ENCODE measurements at regions of chr16 and their contacts with region 1.

Region 1: DNA sequence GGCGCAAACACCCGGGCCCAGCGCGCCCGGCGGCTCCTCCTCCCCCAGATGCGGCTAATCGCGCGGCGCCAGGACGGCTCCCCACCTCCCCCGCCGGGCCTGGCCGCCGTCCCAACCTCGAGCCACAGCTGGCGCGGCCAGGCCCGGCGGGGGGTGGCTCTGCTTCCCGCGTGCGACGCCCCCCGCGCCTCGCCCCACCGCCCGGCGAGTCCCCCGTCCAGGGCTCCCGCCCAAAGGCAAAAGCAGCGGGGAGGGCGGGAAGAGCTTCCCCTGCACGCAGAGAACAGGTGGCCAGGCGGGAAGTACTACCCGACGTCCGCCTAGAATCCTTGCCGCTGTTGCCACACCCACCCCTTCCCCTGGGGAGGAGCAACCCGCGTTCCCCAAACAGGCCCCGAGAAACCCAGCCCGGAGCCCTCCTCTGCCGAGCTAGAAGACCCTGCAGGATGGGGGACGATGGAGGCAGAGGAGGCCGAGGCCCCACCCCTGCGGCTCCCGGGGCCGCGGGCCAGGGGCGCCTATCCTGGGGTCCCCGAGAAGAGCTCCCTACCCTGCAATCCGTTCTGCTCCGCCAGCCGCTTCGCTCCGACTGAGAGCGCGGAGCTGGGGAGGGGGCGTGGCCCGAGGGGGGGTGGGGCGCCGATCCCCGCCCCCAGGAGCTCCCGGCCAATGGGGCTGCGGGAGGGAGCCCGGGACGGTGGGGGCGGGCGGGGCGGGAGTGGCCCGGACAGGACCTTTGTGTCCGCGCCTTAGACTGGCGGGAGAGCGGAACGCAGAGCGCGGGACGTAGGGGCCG is at the start of gene CARHSP1:
- DNase-seq: peak; percentile 90
- H3K4me3 Mint-ChIP-seq: peak within 1 kb of the TSS; percentile 91
- H3K27ac Mint-ChIP-seq: peak within 1 kb of the TSS; percentile 78
- H3K4me1 Mint-ChIP-seq: peaks cover 44% of the 10 kb centered on the region
- H3K27me3 Mint-ChIP-seq: no peaks in the 10 kb centered on the region
- total RNA-seq, gene CARHSP1: 64.9 to 73.1 TPM

Region 2: GRCh38 chr16:8655184-8655717 is 213.4 kb before region 1 on chr16:
- CTCF ChIA-PET with region 1: interaction called, 4 read pairs
- POLR2A ChIA-PET with region 1: no interaction called
- intact Hi-C with region 1: loop called (anchors 5 kb)
- DNase-seq: peak; percentile 81
- H3K4me3 Mint-ChIP-seq: no peak overlapping the region
- H3K27ac Mint-ChIP-seq: peak overlapping the region; percentile 64
- H3K4me1 Mint-ChIP-seq: peaks cover 18% of the 10 kb centered on the region
- H3K27me3 Mint-ChIP-seq: no peaks in the 10 kb centered on the region

Region 3: GRCh38 chr16:8797364-8798173 is 71.0 kb before region 1 on chr16 and contains the starts of genes PMM2 and TMEM186:
- CTCF ChIA-PET with region 1: interaction called, 3 read pairs
- POLR2A ChIA-PET with region 1: interaction called, 9 read pairs
- intact Hi-C with region 1: loop called (anchors 1 kb)
- DNase-seq: peak; percentile 97
- H3K4me3 Mint-ChIP-seq: peak within 1 kb of the TSS; percentile 92
- H3K27ac Mint-ChIP-seq: peak within 1 kb of the TSS; percentile 88
- H3K4me1 Mint-ChIP-seq: peaks cover 50% of the 10 kb centered on the region
- H3K27me3 Mint-ChIP-seq: no peaks in the 10 kb centered on the region
- total RNA-seq, gene PMM2: 34.0 to 36.0 TPM
- total RNA-seq, gene TMEM186: 16.0 TPM

Region 4: GRCh38 chr16:8850279-8850885 is 18.2 kb before region 1 on chr16:
- CTCF ChIA-PET with region 1: interaction called, 3 read pairs
- POLR2A ChIA-PET with region 1: interaction called, 11 read pairs
- intact Hi-C with region 1: no loop called
- DNase-seq: peak; percentile 31
- H3K4me3 Mint-ChIP-seq: no peak overlapping the region
- H3K27ac Mint-ChIP-seq: peak overlapping the region; percentile 83
- H3K4me1 Mint-ChIP-seq: peaks cover 36% of the 10 kb centered on the region
- H3K27me3 Mint-ChIP-seq: no peaks in the 10 kb centered on the region

Region 5: DNA sequence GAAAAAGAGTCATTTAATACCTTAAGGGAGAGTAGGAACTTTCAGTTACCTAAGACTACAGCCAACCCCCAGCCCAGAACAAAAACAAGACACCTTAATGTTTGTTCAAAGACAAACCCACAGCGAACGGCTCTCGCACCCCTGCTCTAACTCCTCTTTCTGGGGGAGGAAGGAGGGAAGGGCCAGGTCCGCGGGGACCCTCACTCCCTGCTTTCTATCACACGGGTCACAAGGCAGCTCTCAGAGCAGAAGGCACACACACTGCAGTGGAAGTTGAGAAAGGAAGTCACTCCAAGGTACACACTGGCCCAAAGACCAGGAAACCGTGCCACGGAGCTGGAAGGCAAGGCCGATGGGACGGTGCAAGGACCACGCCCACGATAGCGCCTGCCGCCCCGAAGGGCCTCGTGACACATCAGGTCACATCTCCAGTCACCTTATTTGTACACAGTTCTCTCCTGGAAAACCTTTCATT is 23.5 kb after region 1 on chr16:
- CTCF ChIA-PET with region 1: interaction called, 3 read pairs
- POLR2A ChIA-PET with region 1: interaction called, 15 read pairs
- intact Hi-C with region 1: loop called (anchors 1 kb)
- DNase-seq: peak; percentile 54
- H3K4me3 Mint-ChIP-seq: peak overlapping the region; percentile 58
- H3K27ac Mint-ChIP-seq: peak overlapping the region; percentile 97
- H3K4me1 Mint-ChIP-seq: peaks cover 26% of the 10 kb centered on the region
- H3K27me3 Mint-ChIP-seq: no peaks in the 10 kb centered on the region

Region 6: GRCh38 chr16:8936421-8936820 is 67.8 kb after region 1 on chr16:
- CTCF ChIA-PET with region 1: interaction called, 14 read pairs
- POLR2A ChIA-PET with region 1: interaction called, 5 read pairs
- intact Hi-C with region 1: no loop called
- DNase-seq: peak; percentile 92
- H3K4me3 Mint-ChIP-seq: no peak overlapping the region
- H3K27ac Mint-ChIP-seq: peak overlapping the region; percentile 66
- H3K4me1 Mint-ChIP-seq: peaks cover 80% of the 10 kb centered on the region
- H3K27me3 Mint-ChIP-seq: no peaks in the 10 kb centered on the region

Region 7: DNA sequence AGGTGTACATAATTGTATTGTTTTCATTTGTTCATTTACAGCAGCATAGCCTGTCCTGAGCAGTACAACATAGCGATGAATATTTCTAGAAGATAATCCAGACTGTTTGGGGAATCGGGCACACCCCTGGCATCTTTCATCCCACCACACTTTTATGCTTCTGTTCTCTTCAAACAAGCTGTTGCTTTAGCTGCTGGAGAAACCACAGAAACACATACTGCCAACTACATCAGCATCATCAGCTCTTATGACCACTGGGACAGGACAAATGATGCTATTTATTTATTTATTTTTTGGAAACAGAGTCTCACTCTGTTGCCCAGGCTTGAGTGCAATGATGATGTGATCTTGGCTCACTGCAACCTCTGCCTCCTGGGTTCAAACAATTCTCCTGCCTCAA is 200.3 kb after region 1 on chr16:
- CTCF ChIA-PET with region 1: no interaction called
- POLR2A ChIA-PET with region 1: no interaction called
- intact Hi-C with region 1: no loop called
- DNase-seq: no peak
- H3K4me3 Mint-ChIP-seq: no peak overlapping the region
- H3K27ac Mint-ChIP-seq: no peak overlapping the region
- H3K4me1 Mint-ChIP-seq: peaks cover 34% of the 10 kb centered on the region
- H3K27me3 Mint-ChIP-seq: peaks cover 6% of the 10 kb centered on the region

Region 8: DNA sequence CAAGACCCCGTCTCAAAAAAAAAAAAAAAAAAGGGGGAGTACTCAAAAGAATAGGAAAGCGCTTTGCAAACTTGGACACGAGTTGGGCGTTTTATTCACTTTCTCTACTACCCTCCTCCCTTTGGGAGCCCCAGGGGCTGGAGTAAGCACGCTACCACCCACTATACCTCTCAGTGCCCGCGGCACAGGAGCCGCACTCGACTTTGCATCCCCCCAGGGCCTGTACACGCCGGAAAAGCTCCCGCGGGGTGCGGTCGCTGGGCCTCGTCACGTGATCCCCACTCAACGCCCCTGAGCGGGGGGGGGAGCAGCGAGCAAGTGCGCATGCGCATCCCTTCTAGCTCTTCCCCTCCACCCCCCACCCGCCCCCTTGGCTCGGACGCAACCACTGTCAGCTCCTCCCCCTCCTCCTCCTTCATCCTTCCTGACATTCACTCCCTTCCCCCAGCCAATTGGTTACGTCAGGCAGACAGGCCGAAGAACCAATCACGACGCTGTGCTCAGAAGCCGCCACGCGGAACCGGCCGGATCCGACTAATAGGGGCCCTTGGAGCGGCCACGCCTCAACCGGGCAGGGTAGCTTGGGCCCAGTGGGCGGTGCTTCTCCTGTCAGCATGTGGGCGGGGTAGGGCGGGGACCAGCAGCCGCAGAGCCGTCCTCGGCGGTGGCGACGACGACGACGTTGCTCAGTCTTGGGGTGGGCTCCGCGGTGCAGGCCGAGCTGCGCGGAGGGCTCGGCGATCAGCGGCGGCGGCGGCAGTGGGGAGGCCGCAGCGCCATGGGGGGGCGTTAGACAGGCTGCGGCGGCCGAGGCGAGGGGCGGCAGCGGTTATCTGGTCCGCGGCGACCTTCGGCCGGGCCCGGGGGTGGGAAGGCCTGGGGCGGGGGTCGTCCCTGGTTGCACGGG is 222.6 kb after region 1 on chr16 and contains the start of gene HAPSTR1:
- CTCF ChIA-PET with region 1: no interaction called
- POLR2A ChIA-PET with region 1: interaction called, 7 read pairs
- intact Hi-C with region 1: loop called (anchors 2 kb)
- DNase-seq: peak; percentile 100
- H3K4me3 Mint-ChIP-seq: peak within 1 kb of the TSS; percentile 94
- H3K27ac Mint-ChIP-seq: peak within 1 kb of the TSS; percentile 95
- H3K4me1 Mint-ChIP-seq: peaks cover 29% of the 10 kb centered on the region
- H3K27me3 Mint-ChIP-seq: no peaks in the 10 kb centered on the region
- total RNA-seq, gene HAPSTR1: 47.1 to 49.1 TPM